ENCODE measurements at regions of chr1 and their contacts with region 1.

Region 1: DNA sequence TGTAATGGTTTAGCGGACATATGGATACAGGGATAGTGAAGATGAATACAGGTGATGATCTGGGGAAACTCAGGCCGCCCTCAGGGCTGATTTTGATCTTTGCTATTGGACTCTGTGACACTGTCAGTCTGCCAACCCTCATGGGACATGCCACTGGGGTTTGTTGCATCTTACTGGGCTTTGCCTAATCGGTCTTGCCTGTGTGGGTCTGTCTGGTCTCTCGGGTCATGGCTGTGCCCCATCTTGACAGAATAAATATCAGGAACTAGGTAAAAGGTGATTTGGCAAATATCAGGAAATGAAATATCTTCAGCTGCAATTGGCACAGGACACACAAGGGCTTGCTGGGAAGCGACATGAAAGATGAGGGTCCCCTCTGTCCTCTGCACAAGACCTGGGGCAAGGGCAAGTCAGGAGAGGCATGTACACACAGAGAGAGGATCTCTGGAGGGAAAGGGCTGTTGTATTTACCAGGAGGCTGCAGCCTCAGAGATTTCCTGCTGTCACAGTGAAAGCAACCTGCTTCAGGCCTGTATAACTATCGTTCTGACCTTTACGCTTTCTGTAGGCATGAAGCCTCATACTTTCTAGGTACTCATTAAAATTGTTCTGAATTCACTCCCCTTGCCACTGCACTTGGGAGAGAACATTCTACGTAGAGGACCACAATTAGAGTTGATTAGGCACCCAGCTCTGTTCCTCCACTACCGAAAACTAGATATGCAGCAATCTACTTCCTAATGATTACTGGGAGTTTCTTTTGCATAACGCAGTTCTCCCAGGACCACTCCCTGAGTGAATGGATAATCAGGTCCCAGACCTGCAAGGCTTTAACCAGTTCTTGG is 52.0 kb upstream of the GADD45A start:
- DNase-seq: no peak
- H3K4me3 ChIP-seq: no peak overlapping the region
- H3K4me3 Mint-ChIP-seq: no peak overlapping the region
- H3K27ac Mint-ChIP-seq: peak overlapping the region; percentile 67
- H3K4me1 ChIP-seq: peaks cover 63% of the 10 kb centered on the region
- H3K4me1 Mint-ChIP-seq: peaks cover 34% of the 10 kb centered on the region
- H3K27me3 ChIP-seq: no peaks in the 10 kb centered on the region
- H3K27me3 Mint-ChIP-seq: no peaks in the 10 kb centered on the region
- CTCF ChIP-seq: no peak

Region 2: GRCh38 chr1:67367370-67368045 is 265.5 kb before region 1 on chr1:
- CTCF ChIA-PET with region 1: no interaction called
- POLR2A ChIA-PET with region 1: no interaction called
- intact Hi-C with region 1: no loop called
- DNase-seq: no peak
- H3K4me3 ChIP-seq: no peak overlapping the region
- H3K4me3 Mint-ChIP-seq: no peak overlapping the region
- H3K27ac Mint-ChIP-seq: no peak overlapping the region
- H3K4me1 ChIP-seq: no peaks in the 10 kb centered on the region
- H3K4me1 Mint-ChIP-seq: no peaks in the 10 kb centered on the region
- H3K27me3 ChIP-seq: no peaks in the 10 kb centered on the region
- H3K27me3 Mint-ChIP-seq: no peaks in the 10 kb centered on the region
- CTCF ChIP-seq: no peak

Region 3: GRCh38 chr1:67561704-67562113 is 71.3 kb before region 1 on chr1:
- CTCF ChIA-PET with region 1: no interaction called
- POLR2A ChIA-PET with region 1: no interaction called
- intact Hi-C with region 1: loop called (anchors 1 kb)
- DNase-seq: peak; percentile 90 to 92
- H3K4me3 ChIP-seq: no peak overlapping the region
- H3K4me3 Mint-ChIP-seq: no peak overlapping the region
- H3K27ac Mint-ChIP-seq: no peak overlapping the region
- H3K4me1 ChIP-seq: peaks cover 16% of the 10 kb centered on the region; the same call in 1 of the 2 replicates
- H3K4me1 Mint-ChIP-seq: no peaks in the 10 kb centered on the region
- H3K27me3 ChIP-seq: no peaks in the 10 kb centered on the region
- H3K27me3 Mint-ChIP-seq: no peaks in the 10 kb centered on the region
- CTCF ChIP-seq: peak; percentile 73 to 77

Region 4: DNA sequence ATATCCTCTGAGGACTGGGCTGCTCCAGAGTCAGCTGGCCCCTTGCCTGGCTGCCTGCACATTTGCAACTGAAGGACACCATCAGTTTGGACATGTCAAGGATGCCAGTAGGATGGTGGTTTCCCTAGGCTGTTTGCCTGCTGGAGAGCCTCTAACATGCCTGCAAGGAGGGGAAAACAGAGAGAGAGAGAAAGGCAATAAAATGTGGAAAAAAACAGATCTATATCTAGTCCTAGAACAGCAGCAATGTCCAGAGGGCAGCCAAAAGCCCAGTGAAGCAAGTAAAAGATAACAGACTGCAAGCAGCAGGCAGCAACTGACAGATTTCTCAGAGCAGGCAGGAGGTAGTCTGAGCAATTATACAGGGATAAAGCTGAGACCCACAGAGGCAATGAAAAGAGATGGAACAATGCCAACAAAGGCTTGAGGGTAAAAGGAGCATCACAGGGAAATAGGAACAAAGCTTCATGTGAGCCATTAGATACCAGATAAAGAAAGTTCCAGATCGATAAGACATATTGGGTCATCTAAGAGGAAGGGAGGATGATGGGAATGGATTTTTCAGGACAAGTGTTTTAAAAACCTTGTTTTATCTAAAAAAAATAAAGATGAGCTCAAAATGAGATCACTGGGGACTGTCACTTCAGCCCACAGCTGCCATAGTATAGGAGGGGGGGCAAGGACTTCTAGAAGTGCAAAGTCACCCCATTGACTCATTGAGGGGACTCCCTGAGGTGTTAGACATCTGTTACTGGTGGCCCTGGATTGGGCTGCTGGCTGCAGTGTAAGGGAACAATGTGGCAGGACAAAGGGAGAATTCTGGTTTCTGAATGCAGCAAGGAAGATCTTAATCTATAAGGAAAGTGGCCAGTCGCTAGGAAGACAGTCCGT is 13.4 kb after region 1 on chr1:
- CTCF ChIA-PET with region 1: no interaction called
- POLR2A ChIA-PET with region 1: no interaction called
- intact Hi-C with region 1: loop called (anchors 1 kb)
- DNase-seq: peak in 1 of 2 experiments; percentile 61
- H3K4me3 ChIP-seq: no peak overlapping the region
- H3K4me3 Mint-ChIP-seq: no peak overlapping the region
- H3K27ac Mint-ChIP-seq: no peak overlapping the region
- H3K4me1 ChIP-seq: peaks cover 74% of the 10 kb centered on the region
- H3K4me1 Mint-ChIP-seq: peaks cover 6% of the 10 kb centered on the region
- H3K27me3 ChIP-seq: no peaks in the 10 kb centered on the region
- H3K27me3 Mint-ChIP-seq: no peaks in the 10 kb centered on the region
- CTCF ChIP-seq: no peak

Region 5: GRCh38 chr1:67832737-67833601 is 199.9 kb after region 1 on chr1 and contains the start of gene GNG12:
- CTCF ChIA-PET with region 1: no interaction called
- POLR2A ChIA-PET with region 1: no interaction called
- intact Hi-C with region 1: no loop called
- DNase-seq: peak; percentile 70 to 79
- H3K4me3 ChIP-seq: peak within 1 kb of the TSS; percentile 41
- H3K4me3 Mint-ChIP-seq: peak within 1 kb of the TSS; percentile 92
- H3K27ac Mint-ChIP-seq: peak within 1 kb of the TSS; percentile 79
- H3K4me1 ChIP-seq: peaks cover 3% of the 10 kb centered on the region
- H3K4me1 Mint-ChIP-seq: no peaks in the 10 kb centered on the region
- H3K27me3 ChIP-seq: no peaks in the 10 kb centered on the region
- H3K27me3 Mint-ChIP-seq: no peaks in the 10 kb centered on the region
- CTCF ChIP-seq: no peak
- total RNA-seq, gene GNG12: 12.0 and 12.5 TPM in 2 replicates